ENCODE measurements at regions of chr16 and their contacts with region 1.

Region 1: GRCh38 chr16:67816240-67817031 is 9.7 kb downstream of the TSNAXIP1 start:
- DNase-seq: peak; percentile 81 to 89 (median 85)
- H3K4me3 ChIP-seq: no peak overlapping the region
- H3K4me3 Mint-ChIP-seq: peak overlapping the region in 2 of 7 donors; percentile 21 to 59
- H3K27ac ChIP-seq: no peak overlapping the region
- H3K27ac Mint-ChIP-seq: peak overlapping the region in 6 of 8 donors; percentile 27 to 61 (median 54)
- H3K4me1 ChIP-seq: no peaks in the 10 kb centered on the region
- H3K4me1 Mint-ChIP-seq: peaks cover 2 to 7% (median 6%) of the 10 kb centered on the region in 3 donors
- H3K27me3 ChIP-seq: no peaks in the 10 kb centered on the region
- H3K27me3 Mint-ChIP-seq: no peaks in the 10 kb centered on the region

Region 2: GRCh38 chr16:67800338-67800926 is 16.0 kb before region 1 on chr16:
- CTCF ChIA-PET with region 1: interaction called, 17 read pairs
- POLR2A ChIA-PET with region 1: no interaction called
- DNase-seq: no peak
- H3K4me3 ChIP-seq: no peak overlapping the region
- H3K4me3 Mint-ChIP-seq: no peak overlapping the region
- H3K27ac ChIP-seq: peak overlapping the region; percentile 17
- H3K27ac Mint-ChIP-seq: peak overlapping the region in 7 of 8 donors; percentile 20 to 85 (median 46)
- H3K4me1 ChIP-seq: peaks cover 42% of the 10 kb centered on the region
- H3K4me1 Mint-ChIP-seq: peaks cover 61 to 80% (median 77%) of the 10 kb centered on the region in 3 donors
- H3K27me3 ChIP-seq: no peaks in the 10 kb centered on the region
- H3K27me3 Mint-ChIP-seq: no peaks in the 10 kb centered on the region

Region 3: DNA sequence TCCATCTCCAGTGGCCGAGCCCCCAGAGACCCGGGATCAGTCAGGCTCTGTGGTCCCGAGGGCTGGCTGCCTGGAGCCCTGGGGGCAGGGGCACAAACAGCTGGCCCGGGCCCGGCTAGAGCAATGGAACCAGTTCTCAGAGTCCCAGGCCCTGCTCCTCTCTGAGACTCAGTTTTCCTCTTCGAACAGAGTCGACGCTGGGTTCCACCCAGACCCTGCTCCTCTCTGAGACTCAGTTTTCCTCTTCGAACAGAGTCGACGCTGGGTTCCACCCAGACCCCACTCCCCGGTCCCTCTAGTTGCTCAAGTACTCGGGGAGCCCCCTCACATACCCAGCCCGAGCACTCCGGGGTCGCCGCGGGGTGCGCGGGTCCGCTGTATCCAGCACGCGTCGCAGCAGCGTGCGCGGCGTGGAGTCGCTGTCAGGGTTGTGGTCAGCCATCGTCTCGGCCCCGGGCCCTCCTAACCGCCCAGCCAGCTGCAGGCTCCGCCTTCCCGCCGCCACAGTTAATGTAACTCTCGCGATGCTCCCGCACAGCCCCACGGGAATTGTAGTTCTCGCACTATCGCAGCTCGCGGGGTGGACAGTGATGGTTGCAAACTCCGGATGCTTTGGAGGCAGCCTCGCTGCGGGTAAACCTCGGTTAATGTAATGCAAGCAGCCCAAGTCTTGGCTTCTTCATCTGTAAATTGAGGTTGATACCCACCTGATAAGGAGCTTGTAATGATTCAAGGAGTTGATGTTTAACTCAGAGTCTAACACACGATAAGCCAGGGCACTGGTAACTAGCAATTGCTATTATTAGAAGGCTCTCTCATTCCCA is 17.2 kb after region 1 on chr16:
- CTCF ChIA-PET with region 1: interaction called, 35 read pairs
- POLR2A ChIA-PET with region 1: interaction called, 7 read pairs
- DNase-seq: peak; percentile 87 to 95 (median 88)
- H3K4me3 ChIP-seq: peak overlapping the region; percentile 90
- H3K4me3 Mint-ChIP-seq: peak overlapping the region; percentile 88 to 95 (median 92)
- H3K27ac ChIP-seq: peak overlapping the region; percentile 79
- H3K27ac Mint-ChIP-seq: peak overlapping the region; percentile 37 to 92 (median 86)
- H3K4me1 ChIP-seq: peaks cover 16% of the 10 kb centered on the region
- H3K4me1 Mint-ChIP-seq: peaks cover 13 to 21% (median 19%) of the 10 kb centered on the region in 3 donors
- H3K27me3 ChIP-seq: no peaks in the 10 kb centered on the region
- H3K27me3 Mint-ChIP-seq: peaks cover 0 to 1% of the 10 kb centered on the region in 2 donors

Region 4: DNA sequence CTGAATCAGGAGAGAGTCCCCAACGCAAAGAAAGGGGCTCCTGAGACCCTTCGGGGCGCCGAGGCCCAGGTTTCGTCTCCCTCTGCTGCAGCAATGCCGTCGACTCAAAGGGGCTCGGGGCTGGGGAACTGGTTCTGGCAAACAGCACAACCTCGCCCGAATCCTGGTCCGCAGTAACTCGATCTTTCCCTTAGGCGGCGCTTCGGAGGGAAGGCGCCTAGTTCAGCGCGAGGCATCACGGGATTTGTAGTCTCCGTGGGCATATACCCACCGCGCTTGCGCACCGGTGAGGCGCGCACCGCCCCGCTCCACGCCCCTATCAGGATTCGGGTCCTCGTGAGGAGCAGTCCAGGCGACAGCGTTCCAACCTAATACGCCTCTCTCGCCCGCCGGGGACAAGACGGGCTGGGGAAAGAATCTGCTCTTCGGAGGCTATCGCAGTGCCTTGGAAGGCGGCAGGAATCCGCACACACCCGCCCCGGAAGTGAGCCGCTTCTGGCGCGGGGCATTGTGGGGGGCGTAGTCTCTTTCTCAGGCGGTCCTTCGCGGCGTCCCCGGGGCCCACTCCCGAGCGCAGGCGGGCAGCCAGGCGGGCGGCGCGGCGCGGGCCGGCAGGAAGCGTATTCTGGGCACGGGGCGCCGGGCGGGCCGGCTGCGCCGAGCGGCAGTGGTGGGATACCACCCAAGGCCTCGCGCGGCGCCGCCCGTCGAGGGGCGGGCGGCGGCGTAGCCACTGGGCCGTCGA is 25.5 kb after region 1 on chr16 and contains the start of gene THAP11:
- CTCF ChIA-PET with region 1: interaction called, 23 read pairs
- POLR2A ChIA-PET with region 1: interaction called, 5 read pairs
- DNase-seq: peak; percentile 89 to 97 (median 95)
- H3K4me3 ChIP-seq: peak within 1 kb of the TSS; percentile 99
- H3K4me3 Mint-ChIP-seq: peak within 1 kb of the TSS; percentile 94 to 99 (median 96)
- H3K27ac ChIP-seq: peak within 1 kb of the TSS; percentile 90
- H3K27ac Mint-ChIP-seq: peak within 1 kb of the TSS; percentile 95 to 99 (median 98)
- H3K4me1 ChIP-seq: peaks cover 41% of the 10 kb centered on the region
- H3K4me1 Mint-ChIP-seq: peaks cover 33 to 43% (median 39%) of the 10 kb centered on the region in 3 donors
- H3K27me3 ChIP-seq: no peaks in the 10 kb centered on the region
- H3K27me3 Mint-ChIP-seq: no peaks in the 10 kb centered on the region
- total RNA-seq, gene THAP11: 52.6 to 55.1 TPM

Region 5: DNA sequence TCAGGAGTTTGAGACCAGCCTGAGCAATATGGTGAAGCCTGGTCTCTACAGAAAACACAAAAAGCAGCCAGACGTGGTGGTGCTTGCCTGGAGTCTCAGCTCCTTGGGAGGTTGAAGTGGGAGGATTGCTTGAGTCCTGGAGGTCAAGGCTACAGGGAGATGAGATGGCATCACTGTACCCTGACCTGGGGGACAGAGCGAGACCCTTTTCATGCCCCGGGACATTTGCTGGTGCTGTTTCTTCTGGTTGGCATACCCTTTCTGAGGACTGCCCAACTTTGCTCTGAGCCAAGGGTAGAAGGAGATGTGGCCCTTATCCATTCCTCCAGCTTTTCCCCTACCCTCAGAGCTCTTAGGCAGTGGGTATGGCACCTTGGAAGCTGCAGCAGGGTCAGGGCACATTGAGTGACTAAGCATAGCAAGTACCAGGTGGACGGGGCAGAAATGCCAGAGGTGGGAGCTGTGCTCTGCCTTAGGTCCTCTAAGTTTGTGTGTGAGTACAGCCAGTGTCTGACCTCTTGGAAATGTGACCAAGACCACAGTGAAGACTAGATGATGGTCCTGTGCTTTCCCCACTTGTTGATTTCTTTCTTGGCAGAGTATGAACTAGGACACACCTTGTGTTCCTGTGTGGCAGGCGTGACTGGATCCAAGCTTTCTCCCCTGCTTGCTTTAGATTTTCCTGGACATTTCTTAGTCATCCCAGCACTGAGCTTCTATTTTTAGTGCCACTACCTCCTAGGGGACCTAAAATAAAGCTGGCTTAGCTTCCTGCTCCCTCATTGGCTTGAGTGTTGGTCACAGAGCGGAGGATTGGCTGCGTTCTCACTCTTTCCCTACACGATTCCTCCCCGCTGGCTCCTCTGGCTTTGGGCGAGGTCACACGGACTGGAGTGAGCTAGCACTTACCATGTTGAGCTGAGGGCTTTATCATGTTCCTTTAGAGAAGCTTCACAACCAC is 46.5 kb after region 1 on chr16:
- CTCF ChIA-PET with region 1: interaction called, 16 read pairs
- POLR2A ChIA-PET with region 1: no interaction called
- DNase-seq: no peak
- H3K4me3 ChIP-seq: no peak overlapping the region
- H3K4me3 Mint-ChIP-seq: no peak overlapping the region
- H3K27ac ChIP-seq: no peak overlapping the region
- H3K27ac Mint-ChIP-seq: peak overlapping the region in 3 of 8 donors; percentile 12 to 68 (median 60)
- H3K4me1 ChIP-seq: peaks cover 8% of the 10 kb centered on the region
- H3K4me1 Mint-ChIP-seq: peaks cover 11 to 18% (median 16%) of the 10 kb centered on the region in 3 donors
- H3K27me3 ChIP-seq: no peaks in the 10 kb centered on the region
- H3K27me3 Mint-ChIP-seq: no peaks in the 10 kb centered on the region

Region 6: GRCh38 chr16:67928561-67929364 is 112.3 kb after region 1 on chr16:
- CTCF ChIA-PET with region 1: interaction called, 18 read pairs
- POLR2A ChIA-PET with region 1: no interaction called
- DNase-seq: peak; percentile 59 to 81 (median 60)
- H3K4me3 ChIP-seq: no peak overlapping the region
- H3K4me3 Mint-ChIP-seq: no peak overlapping the region
- H3K27ac ChIP-seq: no peak overlapping the region
- H3K27ac Mint-ChIP-seq: peak overlapping the region in 4 of 8 donors; percentile 7 to 79 (median 62)
- H3K4me1 ChIP-seq: no peaks in the 10 kb centered on the region
- H3K4me1 Mint-ChIP-seq: peaks cover 0 to 21% (median 4%) of the 10 kb centered on the region in 3 donors
- H3K27me3 ChIP-seq: no peaks in the 10 kb centered on the region
- H3K27me3 Mint-ChIP-seq: no peaks in the 10 kb centered on the region

Region 7: GRCh38 chr16:67935402-67936123 is 119.1 kb after region 1 on chr16:
- CTCF ChIA-PET with region 1: interaction called, 13 read pairs
- POLR2A ChIA-PET with region 1: no interaction called
- DNase-seq: peak; percentile 90 to 97 (median 95)
- H3K4me3 ChIP-seq: peak overlapping the region; percentile 97
- H3K4me3 Mint-ChIP-seq: peak overlapping the region; percentile 100
- H3K27ac ChIP-seq: peak overlapping the region; percentile 87
- H3K27ac Mint-ChIP-seq: peak overlapping the region; percentile 96 to 99 (median 98)
- H3K4me1 ChIP-seq: peaks cover 39% of the 10 kb centered on the region
- H3K4me1 Mint-ChIP-seq: peaks cover 34 to 54% (median 34%) of the 10 kb centered on the region in 3 donors
- H3K27me3 ChIP-seq: no peaks in the 10 kb centered on the region
- H3K27me3 Mint-ChIP-seq: peaks cover 0 to 3% of the 10 kb centered on the region in 2 donors

Region 8: GRCh38 chr16:68473358-68474070 is 657.1 kb after region 1 on chr16:
- CTCF ChIA-PET with region 1: no interaction called
- POLR2A ChIA-PET with region 1: no interaction called
- DNase-seq: no peak
- H3K4me3 ChIP-seq: no peak overlapping the region
- H3K4me3 Mint-ChIP-seq: peak overlapping the region in 1 of 7 donors; percentile 44
- H3K27ac ChIP-seq: no peak overlapping the region
- H3K27ac Mint-ChIP-seq: no peak overlapping the region
- H3K4me1 ChIP-seq: peaks cover 25% of the 10 kb centered on the region
- H3K4me1 Mint-ChIP-seq: peaks cover 26 to 33% (median 33%) of the 10 kb centered on the region in 3 donors
- H3K27me3 ChIP-seq: no peaks in the 10 kb centered on the region
- H3K27me3 Mint-ChIP-seq: peaks cover 0 to 2% of the 10 kb centered on the region in 2 donors

Measured in CD8-positive, alpha-beta memory T cell (primary cell).